ENCODE measurements at regions of chr5 and their contacts with region 1.

Region 1: GRCh38 chr5:75053304-75054133 is 1.2 kb upstream of the GCNT4 start:
- DNase-seq: peak; percentile 67
- H3K4me3 Mint-ChIP-seq: peak overlapping the region; percentile 87
- H3K27ac Mint-ChIP-seq: peak overlapping the region; percentile 79
- H3K4me1 Mint-ChIP-seq: peaks cover 25% of the 10 kb centered on the region
- H3K27me3 Mint-ChIP-seq: no peaks in the 10 kb centered on the region
- CTCF ChIP-seq: peak; percentile 19

Region 2: DNA sequence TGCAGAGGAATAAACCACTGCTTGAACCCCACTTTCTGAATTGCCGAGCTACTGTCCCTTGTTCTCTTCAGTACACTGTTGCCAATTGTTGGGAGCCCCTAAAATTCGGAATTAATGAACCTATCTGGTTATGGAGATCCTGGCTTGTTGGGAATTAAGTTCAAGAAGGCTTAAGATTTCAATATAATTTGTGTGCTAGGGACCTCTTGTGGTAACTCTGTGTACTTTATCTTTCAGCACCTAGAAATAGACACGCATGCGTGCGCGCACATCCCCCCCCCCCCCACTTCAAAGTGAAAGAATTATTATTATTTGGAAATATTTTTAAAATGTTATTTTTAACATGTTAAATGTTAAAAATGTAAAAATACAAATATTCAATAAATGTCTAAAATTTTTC is 134.0 kb before region 1 on chr5:
- CTCF ChIA-PET with region 1: interaction called, 12 read pairs
- POLR2A ChIA-PET with region 1: interaction called, 6 read pairs
- intact Hi-C with region 1: no loop called
- DNase-seq: peak; percentile 58
- H3K4me3 Mint-ChIP-seq: no peak overlapping the region
- H3K27ac Mint-ChIP-seq: no peak overlapping the region
- H3K4me1 Mint-ChIP-seq: peaks cover 7% of the 10 kb centered on the region
- H3K27me3 Mint-ChIP-seq: peaks cover 6% of the 10 kb centered on the region
- CTCF ChIP-seq: peak; percentile 56

Region 3: GRCh38 chr5:75040991-75041390 is 12.5 kb before region 1 on chr5:
- CTCF ChIA-PET with region 1: interaction called, 16 read pairs
- POLR2A ChIA-PET with region 1: interaction called, 4 read pairs
- intact Hi-C with region 1: no loop called
- DNase-seq: peak; percentile 59
- H3K4me3 Mint-ChIP-seq: no peak overlapping the region
- H3K27ac Mint-ChIP-seq: no peak overlapping the region
- H3K4me1 Mint-ChIP-seq: peaks cover 18% of the 10 kb centered on the region
- H3K27me3 Mint-ChIP-seq: no peaks in the 10 kb centered on the region
- CTCF ChIP-seq: no peak

Region 4: GRCh38 chr5:75113354-75113753 is 59.8 kb after region 1 on chr5:
- CTCF ChIA-PET with region 1: interaction called, 4 read pairs
- POLR2A ChIA-PET with region 1: interaction called, 5 read pairs
- intact Hi-C with region 1: loop called (anchors 5 kb)
- DNase-seq: peak; percentile 74
- H3K4me3 Mint-ChIP-seq: no peak overlapping the region
- H3K27ac Mint-ChIP-seq: peak overlapping the region; percentile 89
- H3K4me1 Mint-ChIP-seq: peaks cover 20% of the 10 kb centered on the region
- H3K27me3 Mint-ChIP-seq: no peaks in the 10 kb centered on the region
- CTCF ChIP-seq: no peak

Region 5: DNA sequence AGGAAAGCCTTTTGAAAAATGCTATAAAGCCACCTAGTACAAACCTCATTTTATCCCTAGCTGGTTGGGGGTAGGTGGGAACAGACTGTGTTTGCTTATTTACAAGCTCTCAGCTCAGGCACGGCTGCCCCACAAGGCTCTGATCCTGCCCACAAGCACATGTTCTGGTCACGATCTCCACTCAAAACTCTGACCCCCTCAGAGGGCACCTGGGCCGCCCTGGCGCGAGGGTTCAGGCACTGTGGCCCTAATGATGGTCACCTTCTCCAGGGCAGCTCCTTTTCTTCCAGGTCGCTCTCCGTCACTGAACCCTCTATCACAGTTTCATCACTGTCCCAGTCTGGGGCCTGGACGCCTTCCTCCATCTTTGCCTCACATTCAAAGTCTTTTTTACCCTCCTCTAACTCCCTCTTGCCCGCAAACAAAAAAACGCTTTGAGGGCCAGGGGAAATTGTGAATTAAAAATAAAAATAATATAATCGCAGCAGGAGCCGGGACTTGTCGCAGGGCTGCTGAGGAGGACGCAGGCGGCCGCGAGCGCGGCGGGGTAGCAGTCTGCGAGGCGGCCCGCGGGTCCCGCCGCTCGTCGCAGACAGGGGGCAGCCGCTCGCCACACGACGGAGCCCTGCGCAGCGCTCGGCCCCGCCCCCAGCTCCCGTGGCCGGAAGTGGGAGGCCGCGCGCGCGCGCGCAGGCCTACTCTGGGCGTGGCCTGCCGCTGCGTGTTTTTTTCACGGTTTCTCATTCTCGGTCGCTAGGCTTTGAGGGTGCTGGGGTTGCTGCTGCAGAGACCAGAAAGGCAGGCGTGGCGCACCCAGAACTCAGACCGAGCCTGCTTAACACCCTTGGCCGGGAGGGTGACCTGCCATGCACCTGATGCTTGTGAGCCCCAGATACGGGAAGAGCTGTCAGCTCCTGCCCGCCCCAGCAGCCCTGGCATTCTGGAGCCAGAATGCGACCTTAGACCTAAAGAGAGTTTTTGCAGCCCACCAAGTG is 183.1 kb after region 1 on chr5 and contains the start of gene ANKRD31:
- CTCF ChIA-PET with region 1: interaction called, 6 read pairs
- POLR2A ChIA-PET with region 1: interaction called, 9 read pairs
- intact Hi-C with region 1: loop called (anchors 10 kb)
- DNase-seq: peak; percentile 54
- H3K4me3 Mint-ChIP-seq: peak within 1 kb of the TSS; percentile 75
- H3K27ac Mint-ChIP-seq: peak within 1 kb of the TSS; percentile 79
- H3K4me1 Mint-ChIP-seq: peaks cover 5% of the 10 kb centered on the region
- H3K27me3 Mint-ChIP-seq: no peaks in the 10 kb centered on the region
- CTCF ChIP-seq: peak; percentile 46
- total RNA-seq, gene ANKRD31: 0.28 and 0.56 TPM in 2 replicates

Region 6: GRCh38 chr5:75681125-75681830 is 627.8 kb after region 1 on chr5:
- CTCF ChIA-PET with region 1: no interaction called
- POLR2A ChIA-PET with region 1: no interaction called
- intact Hi-C with region 1: loop called (anchors 2 kb)
- DNase-seq: peak; percentile 46
- H3K4me3 Mint-ChIP-seq: peak overlapping the region; percentile 57
- H3K27ac Mint-ChIP-seq: peak overlapping the region; percentile 12
- H3K4me1 Mint-ChIP-seq: no peaks in the 10 kb centered on the region
- H3K27me3 Mint-ChIP-seq: no peaks in the 10 kb centered on the region
- CTCF ChIP-seq: peak; percentile 68